ENCODE measurements at regions of chr5 and their contacts with region 1.

Region 1: DNA sequence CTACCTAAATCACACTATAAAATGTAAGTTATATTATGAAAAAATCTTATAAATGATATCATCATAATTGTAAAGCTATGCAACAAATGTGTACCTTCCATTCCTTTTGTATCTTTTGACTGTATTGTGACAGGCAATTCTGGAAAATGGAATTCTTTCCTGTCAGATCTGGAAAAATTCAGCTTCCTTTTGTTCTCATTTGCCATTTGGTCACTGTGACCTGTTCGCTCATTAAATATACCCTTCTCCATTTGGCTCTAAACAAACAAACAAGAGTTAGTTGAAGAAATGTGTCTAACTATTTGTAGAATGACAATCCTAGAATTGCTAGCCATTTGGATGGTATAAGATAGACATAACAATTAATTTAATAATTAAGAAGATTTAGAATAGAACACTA is 62.7 kb downstream of the CDKL3 start:
- DNase-seq: no peak
- H3K4me3 Mint-ChIP-seq: no peak overlapping the region
- H3K27ac Mint-ChIP-seq: no peak overlapping the region
- H3K4me1 Mint-ChIP-seq: peaks cover 6% of the 10 kb centered on the region
- H3K27me3 Mint-ChIP-seq: no peaks in the 10 kb centered on the region
- CTCF ChIP-seq: no peak

Region 2: GRCh38 chr5:133552931-133553525 is 751.3 kb before region 1 on chr5:
- CTCF ChIA-PET with region 1: no interaction called
- intact Hi-C with region 1: no loop called
- DNase-seq: peak; percentile 78
- H3K4me3 Mint-ChIP-seq: no peak overlapping the region
- H3K27ac Mint-ChIP-seq: no peak overlapping the region
- H3K4me1 Mint-ChIP-seq: no peaks in the 10 kb centered on the region
- H3K27me3 Mint-ChIP-seq: peaks cover 93% of the 10 kb centered on the region
- CTCF ChIP-seq: peak; percentile 79

Region 3: DNA sequence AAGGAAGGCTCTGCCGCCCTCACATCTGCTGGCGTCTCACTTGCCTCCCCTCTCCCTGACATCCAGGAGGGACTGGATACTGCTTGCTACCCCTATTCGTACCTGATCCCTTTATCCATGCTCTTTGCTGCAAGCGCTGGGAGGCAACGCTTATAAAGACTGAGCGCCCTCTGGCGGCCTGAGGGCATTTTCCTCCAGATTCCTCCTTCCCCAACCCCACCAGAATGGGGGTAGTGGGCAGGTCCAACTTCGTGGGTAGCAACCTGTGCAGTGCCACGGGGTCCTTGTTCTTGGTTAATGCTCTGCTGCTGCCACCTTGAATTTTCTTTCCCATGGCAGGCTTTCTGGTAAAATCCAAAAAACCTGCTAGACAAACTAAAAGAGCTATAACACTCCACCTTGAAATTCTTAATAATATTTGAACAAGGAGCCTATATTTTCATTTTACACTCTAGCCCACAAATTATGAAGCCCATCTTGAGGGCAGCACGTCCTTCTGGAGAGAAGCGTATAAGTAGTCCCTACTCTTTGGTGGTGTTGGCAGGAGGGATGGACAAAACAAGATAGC is 273.6 kb after region 1 on chr5:
- CTCF ChIA-PET with region 1: no interaction called
- intact Hi-C with region 1: loop called (anchors 2 kb)
- DNase-seq: peak; percentile 88
- H3K4me3 Mint-ChIP-seq: no peak overlapping the region
- H3K27ac Mint-ChIP-seq: peak overlapping the region; percentile 77
- H3K4me1 Mint-ChIP-seq: peaks cover 19% of the 10 kb centered on the region
- H3K27me3 Mint-ChIP-seq: no peaks in the 10 kb centered on the region
- CTCF ChIP-seq: peak; percentile 90

Region 4: GRCh38 chr5:134586866-134587524 is 282.7 kb after region 1 on chr5:
- CTCF ChIA-PET with region 1: interaction called, 9 read pairs
- intact Hi-C with region 1: loop called (anchors 2 kb)
- DNase-seq: peak; percentile 97
- H3K4me3 Mint-ChIP-seq: peak overlapping the region; percentile 26
- H3K27ac Mint-ChIP-seq: no peak overlapping the region
- H3K4me1 Mint-ChIP-seq: peaks cover 29% of the 10 kb centered on the region
- H3K27me3 Mint-ChIP-seq: no peaks in the 10 kb centered on the region
- CTCF ChIP-seq: peak; percentile 90

Measured in Calu3 (cell line).